Mammary epithelial cell (primary cell): ENCODE measurements at regions of chr1 and their contacts with region 1.

Region 1: DNA sequence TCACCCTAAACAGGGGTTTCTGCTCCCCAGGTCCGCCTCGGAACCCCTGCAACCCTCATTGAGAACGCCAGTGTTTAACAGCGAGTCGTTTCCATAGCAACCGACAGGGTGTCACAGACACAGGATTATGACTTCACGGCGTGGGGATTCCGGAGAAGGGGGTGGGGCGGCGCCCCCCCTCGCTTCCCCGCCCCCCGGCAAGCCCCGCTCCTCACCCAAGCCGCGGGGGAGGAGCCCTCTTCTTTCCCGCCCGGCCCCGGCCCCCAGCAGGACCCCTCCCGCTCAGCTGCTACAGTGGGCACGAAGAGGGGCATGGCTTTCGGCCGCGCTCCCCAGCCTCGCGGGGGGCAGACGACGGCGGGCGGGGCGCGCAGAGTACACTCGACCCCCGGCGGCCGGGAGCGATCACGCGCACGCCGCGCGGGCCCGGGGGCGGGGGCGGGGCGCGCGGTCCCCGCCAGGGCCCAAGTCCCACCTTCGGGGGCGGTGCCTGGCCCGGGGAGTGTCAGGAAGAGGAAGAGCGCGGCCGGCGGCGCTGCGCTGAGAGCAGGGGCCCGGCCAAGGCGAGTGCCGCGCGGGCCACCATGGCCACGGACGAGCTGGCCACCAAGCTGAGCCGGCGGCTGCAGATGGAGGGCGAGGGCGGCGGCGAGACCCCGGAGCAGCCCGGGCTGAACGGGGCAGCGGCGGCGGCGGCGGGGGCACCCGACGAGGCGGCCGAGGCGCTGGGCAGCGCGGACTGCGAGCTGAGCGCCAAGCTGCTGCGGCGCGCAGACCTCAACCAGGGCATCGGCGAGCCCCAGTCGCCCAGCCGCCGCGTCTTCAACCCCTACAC is at the start of gene EFHD2:
- DNase-seq: peak; percentile 66
- H3K4me3 ChIP-seq: peak within 1 kb of the TSS; percentile 89 to 92 (median 90)
- H3K27ac ChIP-seq: peak within 1 kb of the TSS; percentile 71
- H3K4me1 ChIP-seq: peaks cover 15% of the 10 kb centered on the region
- H3K27me3 ChIP-seq: no peaks in the 10 kb centered on the region
- CTCF ChIP-seq: peak in 1 of 2 donors; percentile 2
- total RNA-seq, gene EFHD2: 17.8 to 56.2 TPM

Region 2: GRCh38 chr1:15345711-15346355 is 63.8 kb before region 1 on chr1:
- CTCF ChIA-PET with region 1: no interaction called
- dilution Hi-C with region 1: no loop called
- in situ Hi-C with region 1: loop called in 1 of 2 experiments (anchors 10 kb)
- intact Hi-C with region 1: no loop called
- DNase-seq: no peak
- H3K4me3 ChIP-seq: no peak overlapping the region
- H3K27ac ChIP-seq: no peak overlapping the region
- H3K4me1 ChIP-seq: peaks cover 20% of the 10 kb centered on the region
- H3K27me3 ChIP-seq: no peaks in the 10 kb centered on the region
- CTCF ChIP-seq: no peak

Region 3: GRCh38 chr1:15352123-15352957 is 57.3 kb before region 1 on chr1:
- CTCF ChIA-PET with region 1: no interaction called
- dilution Hi-C with region 1: no loop called
- in situ Hi-C with region 1: loop called in 1 of 2 experiments (anchors 10 kb)
- intact Hi-C with region 1: loop called (anchors 2 kb)
- DNase-seq: peak; percentile 87
- H3K4me3 ChIP-seq: no peak overlapping the region
- H3K27ac ChIP-seq: peak overlapping the region; percentile 76
- H3K4me1 ChIP-seq: peaks cover 45% of the 10 kb centered on the region
- H3K27me3 ChIP-seq: no peaks in the 10 kb centered on the region
- CTCF ChIP-seq: no peak